ENCODE measurements at regions of chr11 and their contacts with region 1.

Region 1: GRCh38 chr11:34916015-34916842 is at the starts of genes APIP and PDHX:
- DNase-seq: peak; percentile 77 to 97 (median 83)
- ATAC-seq: peak; percentile 94
- H3K4me3 ChIP-seq: peak within 1 kb of the TSS; percentile 87
- H3K4me3 Mint-ChIP-seq: peak within 1 kb of the TSS; percentile 90 to 99 (median 96)
- H3K27ac ChIP-seq: peak within 1 kb of the TSS; percentile 92
- H3K27ac Mint-ChIP-seq: peak within 1 kb of the TSS; percentile 86 to 98 (median 95)
- H3K4me1 ChIP-seq: peaks cover 9 to 18% of the 10 kb centered on the region in 2 donors
- H3K4me1 Mint-ChIP-seq: peaks cover 36 to 71% (median 57%) of the 10 kb centered on the region in 7 donors
- H3K27me3 ChIP-seq: no peaks in the 10 kb centered on the region
- H3K27me3 Mint-ChIP-seq: no peaks in the 10 kb centered on the region
- total RNA-seq, gene APIP: 8.2 to 23.6 (median 17.7) TPM
- total RNA-seq, gene PDHX: 20.0 to 54.1 (median 28.8) TPM

Region 2: DNA sequence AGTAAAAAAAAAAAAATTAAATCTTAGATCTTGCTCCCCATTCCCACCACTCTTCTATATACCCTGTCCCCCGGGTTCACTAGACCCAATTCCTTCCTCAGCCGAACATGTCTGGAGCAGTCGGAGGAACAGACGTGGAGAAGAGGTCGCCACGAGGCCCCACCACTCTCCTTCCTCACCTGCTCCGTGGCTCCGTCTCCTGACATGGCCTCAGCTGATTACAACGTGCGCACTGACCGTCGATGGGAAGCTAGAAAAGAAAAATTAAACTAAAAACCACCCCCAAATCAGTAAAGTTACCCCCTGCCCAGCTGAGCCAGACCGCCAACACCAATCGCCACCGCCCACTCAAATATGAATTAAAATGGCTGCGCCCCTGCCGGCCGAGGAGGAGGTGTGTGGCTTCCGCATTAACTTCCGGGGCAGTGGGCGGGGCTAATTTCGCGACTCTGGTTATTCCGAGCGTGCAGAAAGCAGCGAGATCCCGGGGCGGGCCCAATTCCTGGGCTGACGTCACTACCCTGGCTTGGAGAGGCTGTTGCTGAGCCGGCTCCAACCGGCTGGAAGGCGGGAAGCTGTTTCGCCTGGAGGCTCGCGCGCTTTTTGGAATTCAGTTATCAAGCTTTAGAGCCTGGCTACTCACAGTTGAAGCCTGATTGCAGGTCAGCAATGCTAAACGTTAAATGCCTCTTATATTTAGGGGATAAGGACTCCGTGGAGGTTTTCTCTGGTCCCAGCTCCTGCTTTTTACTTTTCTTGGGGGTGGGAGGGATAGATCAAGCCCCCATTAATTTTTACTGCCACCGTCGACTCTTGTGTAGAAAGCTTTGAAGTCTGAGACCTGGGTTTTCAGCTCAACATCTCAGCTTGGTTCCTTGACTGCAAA is 1754.9 kb before region 1 on chr11 and contains the start of gene CSTF3:
- CTCF ChIA-PET with region 1: no interaction called
- POLR2A ChIA-PET with region 1: no interaction called
- intact Hi-C with region 1: loop called in 1 of 2 experiments (anchors 5 kb)
- DNase-seq: peak; percentile 84 to 95 (median 89)
- ATAC-seq: peak; percentile 98
- H3K4me3 ChIP-seq: peak within 1 kb of the TSS; percentile 97
- H3K4me3 Mint-ChIP-seq: peak within 1 kb of the TSS; percentile 95 to 100 (median 100)
- H3K27ac ChIP-seq: peak within 1 kb of the TSS; percentile 84
- H3K27ac Mint-ChIP-seq: peak within 1 kb of the TSS; percentile 95 to 100 (median 99)
- H3K4me1 ChIP-seq: peaks cover 11 to 19% of the 10 kb centered on the region in 2 donors
- H3K4me1 Mint-ChIP-seq: peaks cover 40 to 64% (median 55%) of the 10 kb centered on the region in 7 donors
- H3K27me3 ChIP-seq: no peaks in the 10 kb centered on the region
- H3K27me3 Mint-ChIP-seq: no peaks in the 10 kb centered on the region
- total RNA-seq, gene CSTF3: 14.6 to 38.6 (median 28.7) TPM

Region 3: DNA sequence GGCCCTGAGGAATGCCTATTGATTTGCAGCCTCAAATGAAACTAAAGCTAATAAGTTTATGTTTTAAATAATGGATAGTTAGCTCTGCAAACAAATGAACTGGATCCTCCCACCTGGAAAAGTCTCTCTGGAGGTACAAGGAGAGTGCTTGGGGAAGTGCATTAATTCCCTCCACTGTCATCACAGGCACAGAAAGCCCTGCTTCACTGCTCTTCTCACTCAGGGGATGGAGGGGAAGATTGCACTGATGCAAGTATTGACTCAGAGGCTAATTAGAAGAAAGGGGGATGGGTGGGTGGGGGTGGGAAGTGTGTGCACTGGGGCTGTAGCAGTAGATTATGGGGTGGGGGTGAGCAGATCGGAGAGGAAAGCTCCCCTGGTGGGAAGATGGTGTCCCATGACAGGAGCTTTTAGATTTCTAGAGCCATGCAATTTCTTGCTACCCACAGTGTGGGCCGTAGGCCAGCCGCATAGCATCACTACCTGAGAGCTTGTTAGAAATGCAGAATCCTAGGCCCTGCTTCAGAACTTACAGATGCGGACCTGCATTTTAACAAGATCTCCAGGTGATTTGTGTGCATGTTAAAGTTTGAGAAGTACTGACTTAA is 1495.2 kb before region 1 on chr11:
- CTCF ChIA-PET with region 1: no interaction called
- POLR2A ChIA-PET with region 1: no interaction called
- intact Hi-C with region 1: no loop called
- DNase-seq: no peak
- ATAC-seq: no peak
- H3K4me3 ChIP-seq: no peak overlapping the region
- H3K4me3 Mint-ChIP-seq: no peak overlapping the region
- H3K27ac ChIP-seq: no peak overlapping the region
- H3K27ac Mint-ChIP-seq: no peak overlapping the region
- H3K4me1 ChIP-seq: no peaks in the 10 kb centered on the region
- H3K4me1 Mint-ChIP-seq: peaks cover 0 to 1% (median 0%) of the 10 kb centered on the region in 7 donors
- H3K27me3 ChIP-seq: no peaks in the 10 kb centered on the region
- H3K27me3 Mint-ChIP-seq: peaks cover 14 to 56% (median 21%) of the 10 kb centered on the region in 5 donors

Region 4: GRCh38 chr11:34105079-34105956 is 810.9 kb before region 1 on chr11 and contains the start of gene NAT10:
- CTCF ChIA-PET with region 1: no interaction called
- POLR2A ChIA-PET with region 1: no interaction called
- intact Hi-C with region 1: loop called (anchors 1 kb)
- DNase-seq: peak; percentile 84 to 98 (median 96)
- ATAC-seq: peak; percentile 97
- H3K4me3 ChIP-seq: peak within 1 kb of the TSS; percentile 91
- H3K4me3 Mint-ChIP-seq: peak within 1 kb of the TSS; percentile 89 to 100 (median 97)
- H3K27ac ChIP-seq: peak within 1 kb of the TSS; percentile 83
- H3K27ac Mint-ChIP-seq: peak within 1 kb of the TSS; percentile 97 to 99 (median 99)
- H3K4me1 ChIP-seq: peaks cover 18 to 21% of the 10 kb centered on the region in 2 donors
- H3K4me1 Mint-ChIP-seq: peaks cover 26 to 76% (median 64%) of the 10 kb centered on the region in 7 donors
- H3K27me3 ChIP-seq: no peaks in the 10 kb centered on the region
- H3K27me3 Mint-ChIP-seq: peaks cover 0 to 5% (median 0%) of the 10 kb centered on the region in 5 donors
- total RNA-seq, gene NAT10: 55.7 to 104 (median 84.3) TPM

Region 5: DNA sequence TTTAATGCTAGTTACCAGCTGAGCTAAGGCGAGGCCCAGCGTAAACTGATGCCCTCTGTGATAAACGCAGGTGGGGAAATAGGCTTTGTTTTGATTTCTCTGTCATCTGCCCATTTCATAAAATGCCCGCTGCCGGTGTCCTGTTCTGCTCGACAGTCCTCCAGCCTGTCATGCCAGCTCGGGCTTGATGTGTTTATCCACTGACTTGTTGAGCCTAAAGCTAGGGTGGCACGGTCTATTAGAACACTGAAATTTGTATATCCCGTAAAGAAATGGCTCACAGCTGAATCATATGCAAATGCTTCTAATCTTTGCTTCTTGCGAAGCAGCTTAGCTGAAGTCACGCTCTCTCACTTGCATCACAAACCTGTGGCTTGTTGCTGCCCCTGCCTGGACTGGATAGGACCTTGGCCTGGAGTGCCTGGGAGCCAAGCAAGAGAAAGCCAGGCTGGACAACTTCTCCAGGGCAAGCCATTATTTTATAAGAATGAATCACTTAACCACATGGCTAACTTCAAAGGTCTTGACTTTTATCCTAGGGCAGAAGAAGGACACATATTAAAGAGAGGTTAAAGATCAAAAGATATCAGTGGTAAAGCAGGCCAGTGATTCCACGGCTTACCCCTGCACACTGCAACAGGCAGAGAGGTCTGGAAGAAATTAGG is 262.3 kb before region 1 on chr11:
- CTCF ChIA-PET with region 1: no interaction called
- POLR2A ChIA-PET with region 1: no interaction called
- intact Hi-C with region 1: loop called (anchors 1 to 2 kb)
- DNase-seq: no peak
- ATAC-seq: peak; percentile 26
- H3K4me3 ChIP-seq: no peak overlapping the region
- H3K4me3 Mint-ChIP-seq: no peak overlapping the region
- H3K27ac ChIP-seq: no peak overlapping the region
- H3K27ac Mint-ChIP-seq: peak overlapping the region in 1 of 9 donors; percentile 29
- H3K4me1 ChIP-seq: peaks cover 21 to 30% of the 10 kb centered on the region in 2 donors
- H3K4me1 Mint-ChIP-seq: peaks cover 13 to 44% (median 32%) of the 10 kb centered on the region in 7 donors
- H3K27me3 ChIP-seq: no peaks in the 10 kb centered on the region
- H3K27me3 Mint-ChIP-seq: peaks cover 13 to 67% (median 40%) of the 10 kb centered on the region in 5 donors

Region 6: DNA sequence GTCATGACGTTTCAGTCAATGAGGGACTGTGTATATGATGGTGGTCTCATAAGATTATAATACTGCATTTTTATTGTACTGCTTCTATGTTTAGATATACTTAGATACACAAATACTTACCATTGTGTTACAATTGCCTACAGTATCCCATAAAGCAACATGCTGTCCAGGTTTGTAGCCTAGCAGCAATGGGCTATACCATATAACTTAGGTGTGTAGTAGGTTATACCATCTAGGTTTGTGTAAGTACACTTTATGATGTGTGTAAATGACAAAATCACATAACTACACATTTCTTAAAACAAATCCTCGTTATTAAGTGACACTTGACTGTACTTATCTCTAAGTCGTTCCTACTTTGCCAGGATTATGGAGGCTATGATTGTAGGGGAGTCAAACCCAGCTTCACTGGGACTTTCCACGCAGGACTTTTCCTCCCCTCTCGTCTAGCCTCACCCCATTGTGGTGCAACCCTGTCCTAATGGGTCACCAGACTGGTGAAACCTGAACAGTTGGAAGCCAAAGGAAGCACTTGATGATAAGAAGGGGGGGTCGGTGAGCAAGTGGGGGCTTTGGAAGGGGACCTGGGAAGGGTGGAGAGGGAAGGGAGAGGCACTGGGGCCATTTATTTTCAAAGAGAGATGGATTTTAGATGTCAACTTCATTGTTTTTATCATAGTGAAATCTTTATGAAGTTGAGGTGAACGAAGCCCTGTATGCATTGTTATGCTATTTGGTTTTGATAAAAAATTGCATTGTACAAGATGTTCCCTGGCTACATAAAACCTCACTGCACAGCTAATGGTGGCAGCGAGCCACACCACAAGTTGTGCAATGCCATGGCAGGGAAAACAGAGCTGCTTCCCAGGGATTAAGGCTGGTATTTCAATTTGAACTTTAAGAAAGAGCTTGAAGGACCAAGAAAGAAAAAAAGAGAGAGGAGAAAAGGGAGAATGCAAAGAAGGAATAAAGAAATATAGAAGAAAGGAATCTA is 166.3 kb before region 1 on chr11:
- CTCF ChIA-PET with region 1: no interaction called
- POLR2A ChIA-PET with region 1: no interaction called
- intact Hi-C with region 1: no loop called
- DNase-seq: no peak
- ATAC-seq: no peak
- H3K4me3 ChIP-seq: no peak overlapping the region
- H3K4me3 Mint-ChIP-seq: no peak overlapping the region
- H3K27ac ChIP-seq: no peak overlapping the region
- H3K27ac Mint-ChIP-seq: no peak overlapping the region
- H3K4me1 ChIP-seq: no peaks in the 10 kb centered on the region
- H3K4me1 Mint-ChIP-seq: no peaks in the 10 kb centered on the region
- H3K27me3 ChIP-seq: no peaks in the 10 kb centered on the region
- H3K27me3 Mint-ChIP-seq: peaks cover 8 to 16% (median 15%) of the 10 kb centered on the region in 5 donors

Region 7: GRCh38 chr11:35036639-35037038 is 120.4 kb after region 1 on chr11:
- CTCF ChIA-PET with region 1: no interaction called
- POLR2A ChIA-PET with region 1: no interaction called
- intact Hi-C with region 1: no loop called
- DNase-seq: no peak
- ATAC-seq: no peak
- H3K4me3 ChIP-seq: no peak overlapping the region
- H3K4me3 Mint-ChIP-seq: no peak overlapping the region
- H3K27ac ChIP-seq: no peak overlapping the region
- H3K27ac Mint-ChIP-seq: peak overlapping the region in 2 of 9 donors; percentile 61 to 62
- H3K4me1 ChIP-seq: peaks cover 14 to 15% of the 10 kb centered on the region in 2 donors
- H3K4me1 Mint-ChIP-seq: peaks cover 30 to 68% (median 56%) of the 10 kb centered on the region in 7 donors
- H3K27me3 ChIP-seq: no peaks in the 10 kb centered on the region
- H3K27me3 Mint-ChIP-seq: peaks cover 0 to 33% (median 0%) of the 10 kb centered on the region in 5 donors

Region 8: GRCh38 chr11:35138943-35139721 is 222.9 kb after region 1 on chr11 and contains the start of gene CD44:
- CTCF ChIA-PET with region 1: no interaction called
- POLR2A ChIA-PET with region 1: no interaction called
- intact Hi-C with region 1: loop called (anchors 2 kb)
- DNase-seq: peak; percentile 65 to 87 (median 73)
- ATAC-seq: peak; percentile 90
- H3K4me3 ChIP-seq: peak within 1 kb of the TSS; percentile 97
- H3K4me3 Mint-ChIP-seq: peak within 1 kb of the TSS; percentile 90 to 100 (median 96)
- H3K27ac ChIP-seq: peak within 1 kb of the TSS; percentile 88
- H3K27ac Mint-ChIP-seq: peak within 1 kb of the TSS; percentile 79 to 100 (median 95)
- H3K4me1 ChIP-seq: peaks cover 33 to 37% of the 10 kb centered on the region in 2 donors
- H3K4me1 Mint-ChIP-seq: peaks cover 43 to 60% (median 50%) of the 10 kb centered on the region in 7 donors
- H3K27me3 ChIP-seq: no peaks in the 10 kb centered on the region
- H3K27me3 Mint-ChIP-seq: peaks cover 0 to 8% (median 0%) of the 10 kb centered on the region in 5 donors
- total RNA-seq, gene CD44: 369 to 1,223 (median 784) TPM

Region 9: GRCh38 chr11:35662649-35663407 is 746.6 kb after region 1 on chr11 and contains the start of gene TRIM44:
- CTCF ChIA-PET with region 1: no interaction called
- POLR2A ChIA-PET with region 1: interaction called, 3 read pairs
- intact Hi-C with region 1: loop called (anchors 1 to 2 kb)
- DNase-seq: peak; percentile 69 to 85 (median 82)
- ATAC-seq: peak; percentile 89
- H3K4me3 ChIP-seq: peak within 1 kb of the TSS; percentile 94
- H3K4me3 Mint-ChIP-seq: peak within 1 kb of the TSS; percentile 91 to 99 (median 95)
- H3K27ac ChIP-seq: peak within 1 kb of the TSS; percentile 94
- H3K27ac Mint-ChIP-seq: peak within 1 kb of the TSS; percentile 90 to 100 (median 96)
- H3K4me1 ChIP-seq: peaks cover 21 to 22% of the 10 kb centered on the region in 2 donors
- H3K4me1 Mint-ChIP-seq: peaks cover 24 to 61% (median 55%) of the 10 kb centered on the region in 7 donors
- H3K27me3 ChIP-seq: no peaks in the 10 kb centered on the region
- H3K27me3 Mint-ChIP-seq: peaks cover 0 to 22% (median 5%) of the 10 kb centered on the region in 5 donors
- total RNA-seq, gene TRIM44: 35.7 to 60.8 (median 58.6) TPM